Naive thymus-derived CD4-positive, alpha-beta T cell (primary cell): ENCODE measurements at regions of chr20 and their contacts with region 1.

Region 1: DNA sequence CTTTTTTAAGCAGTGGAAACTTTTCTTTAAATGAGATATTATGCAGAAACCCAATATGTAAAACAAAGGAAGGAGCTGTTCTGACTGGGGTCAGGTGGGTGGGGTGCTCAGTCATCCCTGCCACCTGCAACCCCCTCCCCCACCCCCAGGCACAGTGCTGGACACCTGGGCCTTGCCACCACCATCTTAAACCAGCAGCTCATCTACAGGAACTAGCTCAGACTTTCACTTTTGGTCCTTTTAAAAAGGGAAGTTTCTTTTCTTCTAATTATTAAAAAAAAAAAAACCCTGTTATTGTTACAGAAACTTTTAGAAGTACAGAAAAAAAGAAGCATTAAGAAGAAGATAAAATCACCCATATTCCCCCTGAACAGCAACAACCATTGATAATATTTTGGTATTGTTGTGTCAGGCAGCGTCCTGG is 37.1 kb downstream of the PPP1R16B start:
- DNase-seq: no peak
- ATAC-seq: peak; percentile 58
- H3K4me3 ChIP-seq: no peak overlapping the region
- H3K4me3 Mint-ChIP-seq: peak overlapping the region; percentile 20 to 74 (median 58)
- H3K27ac ChIP-seq: peak overlapping the region; percentile 64
- H3K27ac Mint-ChIP-seq: peak overlapping the region; percentile 67 to 94 (median 88)
- H3K4me1 ChIP-seq: peaks cover 43 to 72% of the 10 kb centered on the region in 2 donors
- H3K4me1 Mint-ChIP-seq: peaks cover 44 to 80% (median 74%) of the 10 kb centered on the region in 7 donors
- H3K27me3 ChIP-seq: no peaks in the 10 kb centered on the region
- H3K27me3 Mint-ChIP-seq: no peaks in the 10 kb centered on the region

Region 2: DNA sequence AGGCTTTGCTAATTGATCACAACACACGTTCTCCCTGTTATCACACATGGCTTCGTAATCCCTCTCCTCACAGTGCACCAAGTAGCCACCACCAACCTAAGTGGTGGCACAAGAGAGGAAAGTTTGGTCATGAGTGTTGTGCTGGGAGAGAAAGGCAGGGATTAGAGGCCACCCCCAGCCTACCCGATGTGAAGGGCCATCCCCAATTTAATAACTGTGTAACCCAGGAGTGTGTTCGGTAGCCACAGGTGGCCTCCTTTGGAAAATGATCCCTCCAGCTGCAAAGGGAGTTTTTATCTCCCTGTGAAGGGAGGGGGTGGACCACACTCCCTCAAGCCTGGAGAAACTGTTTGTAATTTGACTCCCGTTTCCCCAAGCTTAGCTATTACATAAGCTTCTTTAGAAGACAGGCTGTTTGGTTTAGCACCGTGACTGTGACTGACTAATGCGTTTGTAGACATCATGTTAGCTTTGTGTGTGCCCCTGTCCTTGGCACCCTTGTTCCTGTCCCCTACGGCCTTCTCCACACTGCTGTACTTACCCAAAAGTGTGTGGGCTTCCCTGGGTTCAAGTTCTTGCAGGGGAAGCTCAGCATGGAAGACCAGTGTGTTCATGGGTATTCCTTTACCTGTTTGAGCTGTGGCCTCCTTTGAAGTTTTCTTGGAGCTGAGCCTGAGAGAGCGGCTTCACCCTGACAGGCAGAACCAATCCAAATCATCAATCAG is 16.5 kb before region 1 on chr20:
- CTCF ChIA-PET with region 1: no interaction called
- POLR2A ChIA-PET with region 1: no interaction called
- intact Hi-C with region 1: loop called in 1 of 2 experiments (anchors 2 kb)
- DNase-seq: no peak
- ATAC-seq: no peak
- H3K4me3 ChIP-seq: no peak overlapping the region
- H3K4me3 Mint-ChIP-seq: no peak overlapping the region
- H3K27ac ChIP-seq: no peak overlapping the region
- H3K27ac Mint-ChIP-seq: peak overlapping the region in 7 of 9 donors; percentile 18 to 84 (median 65)
- H3K4me1 ChIP-seq: peaks cover 16 to 17% of the 10 kb centered on the region in 2 donors
- H3K4me1 Mint-ChIP-seq: peaks cover 24 to 83% (median 68%) of the 10 kb centered on the region in 7 donors
- H3K27me3 ChIP-seq: no peaks in the 10 kb centered on the region
- H3K27me3 Mint-ChIP-seq: no peaks in the 10 kb centered on the region

Region 3: GRCh38 chr20:38863024-38863851 is 20.7 kb after region 1 on chr20:
- CTCF ChIA-PET with region 1: interaction called, 4 read pairs
- POLR2A ChIA-PET with region 1: no interaction called
- intact Hi-C with region 1: loop called in 1 of 2 experiments (anchors 1 kb)
- DNase-seq: peak in 1 of 9 donors; percentile 45
- ATAC-seq: peak; percentile 79
- H3K4me3 ChIP-seq: no peak overlapping the region
- H3K4me3 Mint-ChIP-seq: peak overlapping the region in 3 of 10 donors; percentile 8 to 56 (median 10)
- H3K27ac ChIP-seq: no peak overlapping the region
- H3K27ac Mint-ChIP-seq: peak overlapping the region in 6 of 9 donors; percentile 1 to 78 (median 33)
- H3K4me1 ChIP-seq: peaks cover 15 to 29% of the 10 kb centered on the region in 2 donors
- H3K4me1 Mint-ChIP-seq: peaks cover 24 to 64% (median 42%) of the 10 kb centered on the region in 7 donors
- H3K27me3 ChIP-seq: no peaks in the 10 kb centered on the region
- H3K27me3 Mint-ChIP-seq: no peaks in the 10 kb centered on the region